Activated CD8-positive, alpha-beta memory T cell treated with anti-CD3 and anti-CD28 coated beads, Interleukin-2, amount 10 ng/mL, durations not matched to agents 7 days and 5 days (primary cell): ENCODE measurements at regions of chr13 and their contacts with region 1.

Region 1: GRCh38 chr13:19782049-19782726 is 557 bp downstream of the PSPC1 start:
- DNase-seq: peak; percentile 74
- ATAC-seq: peak; percentile 53
- H3K4me3 Mint-ChIP-seq: peak overlapping the region; percentile 97
- H3K27ac Mint-ChIP-seq: peak overlapping the region; percentile 100
- H3K4me1 Mint-ChIP-seq: peaks cover 10% of the 10 kb centered on the region
- H3K27me3 Mint-ChIP-seq: no peaks in the 10 kb centered on the region

Region 2: GRCh38 chr13:19863323-19864023 is 81.3 kb after region 1 on chr13 and contains the start of gene ZMYM5:
- CTCF ChIA-PET with region 1: interaction called, 11 read pairs
- DNase-seq: peak; percentile 99
- ATAC-seq: peak; percentile 87
- H3K4me3 Mint-ChIP-seq: peak within 1 kb of the TSS; percentile 91
- H3K27ac Mint-ChIP-seq: peak within 1 kb of the TSS; percentile 97
- H3K4me1 Mint-ChIP-seq: peaks cover 40% of the 10 kb centered on the region
- H3K27me3 Mint-ChIP-seq: no peaks in the 10 kb centered on the region
- total RNA-seq, gene ZMYM5: 14.3 to 16.9 TPM